ENCODE measurements at regions of chr2 and their contacts with region 1.

Region 1: DNA sequence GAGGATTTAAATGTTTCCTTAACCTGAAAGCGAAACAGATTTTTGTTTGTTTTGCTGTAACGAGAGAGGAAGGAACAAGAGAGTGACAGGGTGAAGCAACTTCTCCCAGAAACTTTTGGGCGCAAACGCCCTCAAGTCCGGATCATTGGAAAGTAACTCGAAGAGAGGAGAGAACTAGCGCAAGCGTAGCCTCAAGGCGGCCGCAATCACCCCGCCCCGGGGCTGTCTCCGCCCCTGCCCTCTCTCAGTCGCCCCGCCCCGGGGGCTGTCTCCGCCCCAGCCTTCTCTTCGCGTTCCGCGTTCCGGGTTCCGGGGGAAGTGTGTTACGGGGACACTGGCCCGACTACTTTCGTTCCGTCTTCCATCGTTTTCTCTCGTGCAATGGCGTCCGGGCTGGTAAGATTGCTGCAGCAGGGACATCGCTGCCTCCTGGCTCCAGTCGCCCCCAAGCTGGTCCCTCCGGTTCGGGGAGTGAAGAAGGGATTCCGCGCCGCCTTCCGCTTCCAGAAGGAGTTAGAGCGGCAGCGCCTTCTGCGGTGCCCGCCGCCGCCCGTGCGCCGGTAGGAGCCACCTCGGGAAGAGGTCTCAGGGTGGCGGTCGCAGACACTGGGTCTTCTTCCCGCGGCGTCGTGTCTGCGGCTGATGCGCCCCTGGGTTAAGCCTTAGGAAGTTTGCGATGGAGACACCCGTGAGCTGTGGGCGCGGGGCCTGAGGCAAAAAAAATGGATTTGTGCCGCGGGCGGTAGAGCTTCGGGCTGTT is at the start of gene MRPL44:
- DNase-seq: peak; percentile 73 to 98
- H3K4me3 ChIP-seq: peak within 1 kb of the TSS; percentile 92 to 95
- H3K27ac ChIP-seq: peak within 1 kb of the TSS; percentile 83 to 88
- H3K4me1 ChIP-seq: peaks cover 7 to 43% of the 10 kb centered on the region in 2 donors
- H3K27me3 ChIP-seq: no peaks in the 10 kb centered on the region
- CTCF ChIP-seq: no peak
- total RNA-seq, gene MRPL44: 3.8 TPM

Region 2: DNA sequence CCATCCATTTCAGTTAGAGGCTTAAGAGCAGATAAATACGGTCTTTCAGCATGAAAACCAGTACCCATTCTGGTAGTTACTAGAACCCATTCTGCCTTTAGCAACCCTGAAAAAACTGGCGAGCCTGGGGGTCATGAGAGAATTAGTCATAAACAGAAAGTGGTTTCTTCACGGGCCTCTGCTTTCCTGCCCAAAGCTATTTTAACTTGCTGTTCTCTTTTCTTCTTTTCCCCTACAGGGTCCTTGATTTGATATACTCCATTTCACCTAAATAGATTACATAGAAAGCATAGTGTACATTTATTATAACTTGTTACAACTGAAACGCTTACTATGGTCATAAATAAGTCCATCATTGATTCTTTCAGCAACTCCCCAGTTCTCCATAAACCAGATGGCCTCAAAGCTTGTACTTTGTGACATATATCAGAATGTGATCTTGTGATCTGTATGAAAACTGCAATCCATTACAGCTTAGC is 60.4 kb before region 1 on chr2:
- intact Hi-C with region 1: loop called (anchors 5 kb)
- DNase-seq: no peak
- H3K4me3 ChIP-seq: no peak overlapping the region
- H3K27ac ChIP-seq: no peak overlapping the region
- H3K4me1 ChIP-seq: no peaks in the 10 kb centered on the region
- H3K27me3 ChIP-seq: no peaks in the 10 kb centered on the region
- CTCF ChIP-seq: no peak

Region 3: DNA sequence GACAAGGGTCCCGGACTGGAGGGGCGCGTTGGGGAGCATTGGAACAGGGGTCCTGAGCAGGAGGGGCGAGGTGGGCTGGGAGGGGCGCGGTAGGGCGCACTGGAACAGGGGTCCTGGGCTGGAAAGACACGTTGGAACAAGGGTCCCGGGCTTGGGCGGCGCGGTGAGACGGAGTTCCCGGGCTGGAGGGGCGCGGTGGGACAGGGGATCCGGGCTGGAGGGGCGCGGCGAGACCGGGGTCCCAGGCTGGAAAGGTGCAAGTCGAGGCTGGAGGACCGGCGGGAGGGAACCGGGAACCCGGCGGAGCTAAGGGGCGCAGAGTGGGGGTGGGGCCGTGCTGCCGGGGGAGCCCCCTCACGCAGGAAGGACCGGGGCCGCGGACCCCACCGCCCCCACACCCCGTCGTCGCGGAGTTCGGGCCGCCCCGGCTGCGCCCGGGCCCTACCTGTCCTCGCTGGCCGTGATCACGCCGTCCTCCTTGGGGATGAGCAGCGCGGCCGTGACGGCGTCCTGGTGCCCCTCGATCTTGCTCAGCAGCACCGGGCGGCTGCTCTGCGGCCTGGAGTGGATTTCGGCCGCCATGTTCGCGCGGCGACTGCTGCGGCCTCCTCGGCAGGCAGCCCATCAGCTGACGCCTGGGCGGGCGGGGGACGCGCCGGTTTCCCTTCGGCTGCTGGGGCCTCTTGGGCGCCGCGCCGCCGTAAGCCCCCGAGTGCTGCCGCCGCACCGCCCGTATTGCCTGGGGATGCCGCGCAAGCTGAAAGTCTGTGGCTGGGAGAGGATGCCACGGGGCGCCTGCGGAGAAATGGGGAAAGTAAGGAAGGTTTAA is 12.4 kb before region 1 on chr2 and contains the start of gene WDFY1:
- intact Hi-C with region 1: loop called (anchors 1 kb)
- DNase-seq: peak; percentile 63 to 94
- H3K4me3 ChIP-seq: peak within 1 kb of the TSS; percentile 80 to 92
- H3K27ac ChIP-seq: peak within 1 kb of the TSS; percentile 96 to 98
- H3K4me1 ChIP-seq: peaks cover 8 to 10% of the 10 kb centered on the region in 2 donors
- H3K27me3 ChIP-seq: no peaks in the 10 kb centered on the region
- CTCF ChIP-seq: no peak
- total RNA-seq, gene WDFY1: 26.2 TPM

Region 4: DNA sequence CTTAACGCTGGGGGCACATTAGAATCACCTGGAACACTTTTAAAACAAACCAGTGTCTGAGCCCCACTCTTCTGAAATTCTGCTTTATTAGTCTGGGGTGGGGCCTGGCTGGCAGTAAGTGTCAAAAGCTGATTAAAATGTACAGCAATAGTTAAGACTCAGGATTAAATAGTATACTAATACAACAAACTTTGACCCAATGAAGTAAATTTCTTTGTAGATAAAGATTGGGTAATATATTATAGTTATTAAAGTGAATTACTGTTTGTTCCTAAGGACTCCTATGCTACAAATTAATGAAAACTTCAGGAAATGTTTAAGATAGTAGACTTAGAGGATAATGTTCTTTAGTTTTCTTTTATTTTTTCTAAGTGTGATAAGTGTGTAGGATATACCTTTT is 283.7 kb after region 1 on chr2:
- intact Hi-C with region 1: no loop called
- DNase-seq: no peak
- H3K4me3 ChIP-seq: no peak overlapping the region
- H3K27ac ChIP-seq: no peak overlapping the region
- H3K4me1 ChIP-seq: no peaks in the 10 kb centered on the region
- H3K27me3 ChIP-seq: no peaks in the 10 kb centered on the region
- CTCF ChIP-seq: no peak

Region 5: GRCh38 chr2:224585205-224586088 is 628.2 kb after region 1 on chr2 and contains the start of gene CUL3:
- intact Hi-C with region 1: loop called (anchors 5 kb)
- DNase-seq: peak; percentile 91 to 100
- H3K4me3 ChIP-seq: peak within 1 kb of the TSS; percentile 69 to 90
- H3K27ac ChIP-seq: peak within 1 kb of the TSS; percentile 89 to 95
- H3K4me1 ChIP-seq: peaks cover 0 to 12% of the 10 kb centered on the region in 2 donors
- H3K27me3 ChIP-seq: no peaks in the 10 kb centered on the region
- CTCF ChIP-seq: no peak
- total RNA-seq, gene CUL3: 16.1 TPM

Measured in ascending aorta (tissue), 2 donors.